Aorta (tissue), 5 donors: ENCODE measurements at regions of chr19 and their contacts with region 1.

Region 1: DNA sequence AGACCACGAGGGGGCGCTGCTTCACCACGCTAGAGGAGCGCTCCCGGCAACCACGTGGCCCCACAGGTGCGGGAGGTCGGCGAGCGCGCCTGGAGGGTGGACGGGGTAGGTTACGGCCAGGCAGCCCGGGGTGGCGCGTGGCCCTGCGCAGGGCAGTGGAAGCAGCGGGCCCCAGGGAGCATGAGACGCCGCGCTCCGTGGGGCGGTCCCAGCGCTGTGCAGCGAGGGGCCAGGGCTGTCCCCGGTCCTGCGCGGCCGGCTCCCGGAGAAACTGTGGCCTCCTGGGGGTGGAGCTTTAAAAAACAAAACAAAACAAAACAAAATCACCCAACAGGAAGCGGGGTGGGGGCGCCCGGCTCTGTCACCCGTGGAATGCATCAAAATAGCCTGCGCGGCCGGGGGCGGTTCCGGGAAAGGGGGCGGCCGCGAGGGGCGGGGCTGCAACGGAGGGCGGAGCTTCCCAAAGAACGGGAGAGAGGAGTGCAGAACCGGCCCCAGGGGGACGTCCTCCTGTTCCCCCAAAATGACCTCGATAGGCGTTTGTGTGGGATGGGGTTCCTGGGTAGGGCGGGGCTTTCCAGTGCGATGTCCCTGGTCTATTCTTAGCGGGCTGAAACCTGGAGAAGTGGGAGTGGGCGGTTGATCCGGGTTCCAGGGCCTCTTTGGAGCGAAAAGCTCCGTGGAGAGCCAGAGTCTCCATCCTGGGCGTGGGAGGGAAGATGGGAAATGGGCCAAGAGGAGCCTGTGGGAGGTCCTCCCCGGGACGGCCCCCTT is 27.3 kb downstream of the NUMBL start:
- DNase-seq: peak; percentile 93 to 98
- ATAC-seq: peak; percentile 92
- H3K4me3 ChIP-seq: peak overlapping the region; percentile 5 to 22
- H3K27ac ChIP-seq: peak overlapping the region in 1 of 2 donors; percentile 71
- H3K4me1 ChIP-seq: no peaks in the 10 kb centered on the region
- H3K27me3 ChIP-seq: no peaks in the 10 kb centered on the region

Region 2: DNA sequence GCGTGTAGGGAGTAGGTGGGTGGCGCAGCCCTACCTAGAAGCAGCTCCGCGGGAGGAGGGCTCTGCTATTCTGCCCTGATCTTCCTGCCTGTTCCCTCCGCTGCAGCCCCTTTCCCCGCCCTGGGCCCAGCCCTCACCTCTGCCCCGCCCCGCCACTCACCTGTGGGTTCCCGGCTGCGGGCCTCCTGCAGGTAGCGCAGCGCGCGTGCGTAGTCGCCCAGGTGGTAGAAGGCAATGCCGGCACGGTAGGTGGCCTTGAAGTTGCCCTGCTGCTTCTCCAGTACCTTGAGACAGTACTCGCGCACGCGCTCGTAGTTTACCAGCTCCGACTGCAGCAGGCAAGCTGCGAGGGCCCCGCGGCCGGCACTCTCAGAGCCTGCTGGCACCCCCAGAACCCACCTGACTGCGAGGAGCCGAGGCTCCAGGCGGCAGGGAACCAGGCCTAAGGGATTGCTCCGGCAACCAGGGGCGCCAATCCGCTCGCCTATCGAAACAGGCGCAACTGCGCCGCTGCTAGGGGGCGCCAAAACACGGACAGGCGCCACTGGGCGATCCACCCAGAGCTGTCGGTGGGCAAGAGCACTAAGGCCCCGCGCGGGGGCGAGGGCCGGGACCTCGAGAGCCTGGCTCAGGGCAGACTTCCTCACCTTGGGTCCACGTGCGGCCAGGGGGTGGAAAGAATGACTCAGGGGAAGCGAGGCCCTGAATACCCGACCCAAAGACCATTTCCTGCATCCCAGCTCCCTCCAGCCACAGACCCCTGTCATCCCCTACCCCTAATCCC is 445.9 kb before region 1 on chr19:
- intact Hi-C with region 1: no loop called
- DNase-seq: no peak
- ATAC-seq: no peak
- H3K4me3 ChIP-seq: no peak overlapping the region
- H3K27ac ChIP-seq: no peak overlapping the region
- H3K4me1 ChIP-seq: no peaks in the 10 kb centered on the region
- H3K27me3 ChIP-seq: no peaks in the 10 kb centered on the region

Region 3: DNA sequence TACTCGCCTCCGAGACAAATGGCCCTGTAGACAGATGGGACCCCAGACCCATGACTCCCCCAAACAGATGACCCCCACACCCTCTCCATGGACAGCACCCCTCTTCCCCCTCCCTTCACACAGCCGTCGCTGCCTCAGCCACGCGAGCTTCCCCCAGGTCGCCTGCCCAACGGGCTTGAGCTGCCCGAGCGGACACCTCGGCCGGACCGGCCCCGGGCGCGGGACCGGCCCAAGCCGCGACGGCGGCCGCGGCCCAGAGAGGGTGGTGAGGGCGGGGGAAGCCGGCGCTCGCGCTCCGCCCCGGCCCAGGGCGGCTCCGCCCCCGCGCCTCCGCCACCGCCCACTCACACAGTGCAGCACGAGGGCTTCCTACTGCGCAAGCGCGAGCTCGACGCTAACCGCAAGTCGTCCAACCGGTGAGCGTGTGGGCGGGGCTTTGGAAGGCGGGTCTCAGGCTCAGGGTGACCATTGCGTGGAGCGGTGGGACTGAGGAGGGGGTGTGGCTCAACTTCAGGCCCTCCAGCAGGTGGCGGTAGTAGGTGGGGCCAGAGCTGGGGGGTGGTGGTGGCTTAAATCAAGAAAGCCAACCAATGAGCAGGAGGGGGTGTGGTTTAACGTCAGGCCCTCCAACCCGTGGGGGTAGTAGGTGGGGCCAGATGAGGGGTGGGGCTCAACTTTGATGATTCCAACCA is 92.6 kb before region 1 on chr19:
- intact Hi-C with region 1: no loop called
- DNase-seq: peak; percentile 100
- ATAC-seq: peak; percentile 96
- H3K4me3 ChIP-seq: peak overlapping the region in 1 of 2 donors; percentile 11
- H3K27ac ChIP-seq: no peak overlapping the region
- H3K4me1 ChIP-seq: no peaks in the 10 kb centered on the region
- H3K27me3 ChIP-seq: no peaks in the 10 kb centered on the region

Region 4: DNA sequence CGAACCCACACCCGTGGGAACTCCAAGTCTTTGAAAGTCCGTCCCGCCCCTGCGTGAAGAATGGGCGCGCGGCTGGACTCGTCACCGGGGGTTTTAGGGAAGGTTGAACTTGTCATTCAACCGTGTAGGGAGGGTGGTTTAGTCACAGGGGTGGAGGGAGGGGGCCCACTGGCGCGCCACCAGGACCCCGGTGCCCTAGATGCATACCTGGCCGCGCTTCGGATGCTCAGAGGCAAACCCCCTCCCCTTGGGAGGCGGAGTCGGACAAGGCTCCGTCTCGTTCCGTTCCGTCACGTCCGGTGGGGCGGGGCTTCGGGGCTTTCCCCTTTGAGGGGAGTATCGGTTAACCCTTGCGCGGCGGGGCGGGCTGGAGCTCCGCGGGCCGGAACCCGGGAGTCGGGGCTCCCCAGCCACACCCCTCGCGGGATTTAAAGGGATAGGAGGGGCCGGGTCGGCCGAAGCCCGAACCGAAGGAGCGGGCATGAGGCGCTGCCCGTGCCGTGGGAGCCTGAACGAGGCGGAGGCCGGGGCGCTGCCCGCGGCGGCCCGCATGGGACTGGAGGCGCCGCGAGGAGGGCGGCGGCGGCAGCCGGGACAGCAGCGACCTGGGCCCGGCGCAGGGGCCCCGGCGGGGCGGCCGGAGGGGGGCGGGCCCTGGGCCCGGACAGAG is 53.7 kb after region 1 on chr19 and contains the starts of genes COQ8B and ITPKC:
- intact Hi-C with region 1: loop called in 1 of 2 experiments (anchors 2 kb)
- DNase-seq: peak; percentile 100
- ATAC-seq: peak; percentile 90
- H3K4me3 ChIP-seq: peak within 1 kb of the TSS; percentile 55 to 84
- H3K27ac ChIP-seq: peak within 1 kb of the TSS; percentile 96 to 98
- H3K4me1 ChIP-seq: no peaks in the 10 kb centered on the region
- H3K27me3 ChIP-seq: no peaks in the 10 kb centered on the region
- total RNA-seq, gene COQ8B: 26.2 to 39.3 TPM
- total RNA-seq, gene ITPKC: 23.9 to 25.7 TPM

Region 5: DNA sequence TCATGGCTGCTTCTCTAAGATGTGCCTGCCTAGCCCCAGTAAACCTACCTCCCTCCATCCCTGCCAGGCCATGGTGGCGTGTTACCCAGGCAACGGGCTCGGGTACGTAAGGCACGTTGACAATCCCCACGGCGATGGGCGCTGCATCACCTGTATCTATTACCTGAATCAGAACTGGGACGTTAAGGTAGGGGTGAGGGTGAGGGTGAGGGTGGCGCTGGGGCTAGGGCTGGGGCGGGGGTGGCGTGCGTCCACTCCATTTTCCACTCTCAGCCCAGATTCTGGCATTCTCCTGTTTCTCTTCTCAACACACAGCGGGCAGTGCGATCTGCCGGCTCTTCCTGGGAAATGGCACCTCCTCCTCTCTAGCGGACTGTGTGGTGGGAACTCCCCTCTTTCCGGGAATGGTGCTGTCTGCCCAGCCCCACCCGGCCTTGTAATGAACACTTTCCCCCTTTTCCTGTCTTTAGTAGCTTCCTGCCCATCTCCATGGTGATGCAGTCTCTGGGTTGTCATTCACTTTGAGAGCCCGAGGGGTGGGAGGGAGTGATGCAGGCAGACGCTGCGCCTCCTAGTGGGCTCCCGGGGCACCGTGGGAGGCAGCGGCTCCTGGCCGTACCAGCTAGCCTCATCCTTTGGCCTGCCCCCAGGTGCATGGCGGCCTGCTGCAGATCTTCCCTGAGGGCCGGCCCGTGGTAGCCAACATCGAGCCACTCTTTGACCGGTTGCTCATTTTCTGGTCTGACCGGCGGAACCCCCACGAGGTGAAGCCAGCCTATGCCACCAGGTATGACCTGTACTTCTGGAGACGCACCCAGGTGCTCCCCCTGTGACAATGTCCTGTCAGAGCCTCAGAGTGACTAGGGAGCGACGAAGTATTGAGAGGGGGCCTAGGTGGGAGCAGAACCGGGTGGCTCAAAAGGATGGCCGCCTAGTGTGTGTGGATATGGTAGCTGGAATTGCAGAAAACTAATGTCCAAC is 143.7 kb after region 1 on chr19:
- intact Hi-C with region 1: loop called in 1 of 2 experiments (anchors 5 kb)
- DNase-seq: peak; percentile 85 to 93
- ATAC-seq: peak; percentile 62
- H3K4me3 ChIP-seq: no peak overlapping the region
- H3K27ac ChIP-seq: peak overlapping the region in 1 of 2 donors; percentile 32
- H3K4me1 ChIP-seq: no peaks in the 10 kb centered on the region
- H3K27me3 ChIP-seq: no peaks in the 10 kb centered on the region

Region 6: GRCh38 chr19:40813182-40813958 is 150.3 kb after region 1 on chr19:
- intact Hi-C with region 1: loop called in 1 of 2 experiments (anchors 2 kb)
- DNase-seq: peak in 1 of 2 donors; percentile 80
- ATAC-seq: no peak
- H3K4me3 ChIP-seq: no peak overlapping the region
- H3K27ac ChIP-seq: no peak overlapping the region
- H3K4me1 ChIP-seq: peaks cover 0 to 2% of the 10 kb centered on the region in 2 donors
- H3K27me3 ChIP-seq: no peaks in the 10 kb centered on the region

Region 7: DNA sequence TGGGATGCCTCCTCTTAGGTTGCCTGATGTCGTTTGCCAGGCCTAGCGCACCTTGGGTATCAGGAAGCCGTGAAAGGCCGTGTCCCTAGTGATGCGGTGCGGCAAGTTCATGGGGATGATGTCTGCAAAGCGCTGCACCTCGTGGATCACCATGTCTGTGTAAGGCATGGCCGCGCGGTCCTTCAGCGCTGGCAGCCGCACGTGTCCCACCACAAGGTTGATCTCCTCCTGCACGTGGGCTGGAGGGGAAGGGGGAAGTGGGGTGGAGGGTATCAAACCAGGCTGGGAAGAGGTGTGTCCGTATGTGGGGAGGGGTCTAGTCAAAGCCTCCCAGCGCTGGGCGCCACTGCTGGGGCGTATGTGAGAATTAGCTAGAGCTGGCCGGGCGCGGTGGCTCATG is 159.1 kb after region 1 on chr19:
- intact Hi-C with region 1: loop called (anchors 1 to 2 kb)
- DNase-seq: no peak
- ATAC-seq: no peak
- H3K4me3 ChIP-seq: no peak overlapping the region
- H3K27ac ChIP-seq: no peak overlapping the region
- H3K4me1 ChIP-seq: peaks cover 0 to 2% of the 10 kb centered on the region in 2 donors
- H3K27me3 ChIP-seq: no peaks in the 10 kb centered on the region

Region 8: GRCh38 chr19:40908976-40909375 is 245.9 kb after region 1 on chr19:
- intact Hi-C with region 1: loop called in 1 of 2 experiments (anchors 5 kb)
- DNase-seq: no peak
- ATAC-seq: no peak
- H3K4me3 ChIP-seq: no peak overlapping the region
- H3K27ac ChIP-seq: no peak overlapping the region
- H3K4me1 ChIP-seq: no peaks in the 10 kb centered on the region
- H3K27me3 ChIP-seq: no peaks in the 10 kb centered on the region

Region 9: DNA sequence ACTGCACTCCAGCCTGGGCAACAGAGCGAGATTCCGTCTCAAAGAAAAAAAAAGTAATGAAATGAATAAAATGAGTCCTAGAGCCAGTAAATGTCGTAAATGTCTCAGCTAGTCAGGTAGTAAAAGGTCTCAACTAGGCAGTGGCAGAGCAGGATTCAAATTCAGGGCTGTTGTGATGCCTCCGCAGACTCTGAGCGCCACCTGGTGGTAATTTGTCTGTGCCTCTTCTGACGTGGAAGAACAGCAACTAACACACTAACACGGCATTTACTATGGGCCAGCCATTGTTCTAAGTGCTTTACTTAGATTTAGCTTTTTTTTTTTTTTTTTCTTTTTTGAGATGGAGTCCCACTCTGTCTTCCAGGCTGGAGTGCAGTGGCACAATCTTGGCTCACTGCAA is 481.3 kb after region 1 on chr19:
- intact Hi-C with region 1: loop called in 1 of 2 experiments (anchors 10 kb)
- DNase-seq: peak; percentile 87 to 88
- ATAC-seq: peak; percentile 68
- H3K4me3 ChIP-seq: no peak overlapping the region
- H3K27ac ChIP-seq: no peak overlapping the region
- H3K4me1 ChIP-seq: no peaks in the 10 kb centered on the region
- H3K27me3 ChIP-seq: no peaks in the 10 kb centered on the region